Heart left ventricle (tissue), 16 donors: ENCODE measurements at regions of chr3 and their contacts with region 1.

Region 1: GRCh38 chr3:160754855-160755747 is 930 bp upstream of the PPM1L start:
- DNase-seq: peak; percentile 94 to 97 (median 95)
- ATAC-seq: peak; percentile 93 to 96 (median 94)
- H3K4me3 ChIP-seq: peak overlapping the region; percentile 66 to 93 (median 82)
- H3K27ac ChIP-seq: peak overlapping the region; percentile 87 to 99 (median 96)
- H3K4me1 ChIP-seq: peaks cover 0 to 38% (median 13%) of the 10 kb centered on the region in 12 donors
- H3K27me3 ChIP-seq: no peaks in the 10 kb centered on the region
- CTCF ChIP-seq: no peak
- POLR2A ChIP-seq: peak; percentile 49 to 92

Region 2: DNA sequence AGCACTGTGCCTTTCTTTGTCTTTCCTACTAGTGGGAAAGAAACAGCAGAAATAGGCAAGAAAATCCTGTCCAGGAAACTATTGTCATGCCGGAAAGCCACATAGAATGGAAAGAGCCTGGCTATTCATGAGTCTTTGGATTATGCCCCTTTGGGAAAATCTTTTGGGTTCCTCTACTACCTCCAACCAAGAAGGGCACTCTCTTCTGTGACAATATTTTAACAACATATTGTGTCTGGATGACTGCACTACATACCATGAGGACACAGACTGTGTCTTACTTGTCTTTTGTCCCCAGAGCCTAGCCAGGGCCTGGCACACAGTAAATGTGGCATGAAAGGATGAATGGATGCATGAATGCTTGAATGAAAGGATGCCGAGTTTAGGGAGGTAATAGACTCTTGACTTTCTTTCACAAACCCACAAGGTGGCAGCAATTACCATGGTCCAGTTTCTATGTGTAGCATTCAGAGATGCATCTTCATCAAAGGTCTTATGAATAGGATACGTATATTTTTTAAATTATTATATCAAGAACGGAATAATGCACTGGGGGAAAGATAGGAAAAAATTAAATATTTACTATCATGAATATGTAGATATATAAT is 47.8 kb before region 1 on chr3:
- intact Hi-C with region 1: loop called in 1 of 10 experiments (anchors 5 kb)
- DNase-seq: peak in 2 of 5 donors; percentile 31 to 43
- ATAC-seq: peak; percentile 58 to 85 (median 72)
- H3K4me3 ChIP-seq: no peak overlapping the region
- H3K27ac ChIP-seq: no peak overlapping the region
- H3K4me1 ChIP-seq: peaks cover 0 to 3% (median 0%) of the 10 kb centered on the region in 12 donors
- H3K27me3 ChIP-seq: no peaks in the 10 kb centered on the region
- CTCF ChIP-seq: peak; percentile 43 to 78 (median 61)
- POLR2A ChIP-seq: no peak

Region 3: GRCh38 chr3:160784848-160785247 is 29.7 kb after region 1 on chr3:
- intact Hi-C with region 1: no loop called
- DNase-seq: no peak
- ATAC-seq: peak in 3 of 4 donors; percentile 37 to 57 (median 45)
- H3K4me3 ChIP-seq: no peak overlapping the region
- H3K27ac ChIP-seq: peak overlapping the region in 1 of 12 donors; percentile 50
- H3K4me1 ChIP-seq: peaks cover 0 to 35% (median 8%) of the 10 kb centered on the region in 12 donors
- H3K27me3 ChIP-seq: no peaks in the 10 kb centered on the region
- CTCF ChIP-seq: no peak
- POLR2A ChIP-seq: no peak

Region 4: DNA sequence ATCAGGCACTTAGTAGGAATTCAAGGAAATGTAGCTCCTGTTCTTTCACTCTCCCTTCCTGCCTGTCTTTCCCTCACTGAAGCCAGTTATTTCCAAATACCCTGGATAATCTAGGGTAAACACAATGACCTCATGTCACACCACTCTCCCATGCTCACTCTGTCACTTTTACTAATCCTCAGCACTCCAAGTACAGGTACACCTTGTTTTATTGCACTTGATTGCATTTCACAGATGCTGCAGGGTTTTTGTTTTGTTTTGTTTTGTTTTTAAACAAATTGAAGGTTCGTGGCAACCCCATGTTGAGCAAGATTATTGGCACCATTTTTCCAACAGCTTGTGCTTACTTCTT is 41.7 kb after region 1 on chr3:
- intact Hi-C with region 1: loop called in 1 of 10 experiments (anchors 1 kb)
- DNase-seq: no peak
- ATAC-seq: peak; percentile 44 to 80 (median 60)
- H3K4me3 ChIP-seq: no peak overlapping the region
- H3K27ac ChIP-seq: peak overlapping the region in 9 of 12 donors; percentile 9 to 66 (median 32)
- H3K4me1 ChIP-seq: peaks cover 0 to 51% (median 22%) of the 10 kb centered on the region in 12 donors
- H3K27me3 ChIP-seq: no peaks in the 10 kb centered on the region
- CTCF ChIP-seq: no peak
- POLR2A ChIP-seq: no peak

Region 5: DNA sequence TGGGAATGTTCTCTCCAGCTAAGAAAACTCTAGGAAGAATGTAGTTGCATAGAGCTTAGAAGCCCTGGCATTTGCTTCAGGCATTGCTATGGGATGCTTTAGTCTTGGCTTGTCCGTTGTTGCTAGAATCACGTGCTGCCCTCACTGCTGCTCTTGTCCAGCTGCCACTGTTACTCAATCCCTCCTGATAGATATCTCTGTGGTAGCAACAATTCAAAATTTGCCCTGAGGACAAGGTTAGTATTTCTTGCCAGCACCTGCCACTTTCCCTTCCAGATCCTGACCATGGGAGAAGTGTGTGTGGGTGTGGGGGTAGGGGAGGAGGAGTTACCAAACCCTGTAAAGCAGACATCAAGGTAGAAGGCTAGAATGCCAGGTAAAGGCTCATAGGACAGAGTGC is 114.7 kb after region 1 on chr3:
- intact Hi-C with region 1: loop called in 1 of 10 experiments (anchors 2 kb)
- DNase-seq: peak in 4 of 5 donors; percentile 15 to 46 (median 33)
- ATAC-seq: peak; percentile 82 to 93 (median 88)
- H3K4me3 ChIP-seq: peak overlapping the region in 10 of 12 donors; percentile 2 to 52 (median 37)
- H3K27ac ChIP-seq: peak overlapping the region in 11 of 12 donors; percentile 11 to 77 (median 66)
- H3K4me1 ChIP-seq: peaks cover 0 to 21% (median 5%) of the 10 kb centered on the region in 12 donors
- H3K27me3 ChIP-seq: no peaks in the 10 kb centered on the region
- CTCF ChIP-seq: no peak
- POLR2A ChIP-seq: no peak

Region 6: DNA sequence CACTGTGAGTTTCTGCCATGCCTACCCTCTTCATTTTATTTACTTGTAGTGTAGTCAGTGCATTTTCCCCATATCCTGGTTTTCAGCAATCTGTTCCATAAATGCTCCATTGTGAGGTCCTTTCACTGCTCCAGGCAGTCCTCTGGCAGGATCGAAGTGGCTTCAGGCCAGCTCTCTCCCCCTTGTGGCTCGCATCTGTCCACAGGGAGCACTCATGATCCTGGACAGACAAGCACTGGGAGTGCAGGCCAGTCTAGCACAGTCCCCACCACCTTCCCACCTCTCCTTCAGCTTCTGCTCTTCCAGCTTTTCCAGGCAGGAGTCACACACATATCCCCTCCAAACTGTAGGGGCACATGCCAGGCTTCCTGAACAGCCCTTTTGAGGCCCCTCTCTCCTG is 174.5 kb after region 1 on chr3:
- intact Hi-C with region 1: loop called in 8 of 10 experiments (anchors 5 kb)
- DNase-seq: peak; percentile 46 to 71 (median 67)
- ATAC-seq: peak; percentile 90 to 97 (median 92)
- H3K4me3 ChIP-seq: no peak overlapping the region
- H3K27ac ChIP-seq: no peak overlapping the region
- H3K4me1 ChIP-seq: peaks cover 0 to 31% (median 5%) of the 10 kb centered on the region in 12 donors
- H3K27me3 ChIP-seq: no peaks in the 10 kb centered on the region
- CTCF ChIP-seq: peak in 8 of 12 donors; percentile 10 to 53 (median 41)
- POLR2A ChIP-seq: no peak

Region 7: GRCh38 chr3:161104561-161105551 is 349.8 kb after region 1 on chr3 and contains the start of gene B3GALNT1:
- intact Hi-C with region 1: loop called in 1 of 10 experiments (anchors 2 kb)
- DNase-seq: peak; percentile 52 to 78 (median 70)
- ATAC-seq: peak; percentile 21 to 83 (median 63)
- H3K4me3 ChIP-seq: peak within 1 kb of the TSS; percentile 65 to 96 (median 78)
- H3K27ac ChIP-seq: peak within 1 kb of the TSS; percentile 73 to 95 (median 86)
- H3K4me1 ChIP-seq: peaks cover 0 to 45% (median 18%) of the 10 kb centered on the region in 12 donors
- H3K27me3 ChIP-seq: no peaks in the 10 kb centered on the region
- CTCF ChIP-seq: peak in 1 of 12 donors; percentile 11
- POLR2A ChIP-seq: peak in 1 of 2 donors; percentile 24
- total RNA-seq, gene B3GALNT1: 42.0 to 94.6 (median 67.0) TPM